IMR-90 (cell line): ENCODE measurements at regions of chr10 and their contacts with region 1.

Region 1: GRCh38 chr10:28393966-28394568 is 91.2 kb upstream of the MPP7 start:
- DNase-seq: peak; percentile 57
- ATAC-seq: peak; percentile 95
- H3K4me3 ChIP-seq: no peak overlapping the region
- H3K27ac ChIP-seq: no peak overlapping the region
- H3K4me1 ChIP-seq: no peaks in the 10 kb centered on the region
- H3K27me3 ChIP-seq: 0 out of 2 replicates have a peak, but pooled peaks cover 2% of the 10 kb centered on the region
- CTCF ChIP-seq: peak; percentile 76
- POLR2A ChIP-seq: no peak
- RAD21 ChIP-seq: peak; percentile 64

Region 2: GRCh38 chr10:28250782-28251181 is 143.3 kb before region 1 on chr10:
- CTCF ChIA-PET with region 1: interaction called, 15 read pairs
- POLR2A ChIA-PET with region 1: no interaction called
- dilution Hi-C with region 1: loop called (anchors 25 kb)
- in situ Hi-C with region 1: no loop called
- intact Hi-C with region 1: no loop called
- DNase-seq: peak; percentile 51
- ATAC-seq: peak; percentile 59
- H3K4me3 ChIP-seq: no peak overlapping the region
- H3K27ac ChIP-seq: no peak overlapping the region
- H3K4me1 ChIP-seq: peaks cover 5% of the 10 kb centered on the region; the same call in 1 of the 2 replicates
- H3K27me3 ChIP-seq: peaks cover 6% of the 10 kb centered on the region; the same call in 1 of the 2 replicates
- CTCF ChIP-seq: peak; percentile 67
- POLR2A ChIP-seq: no peak
- RAD21 ChIP-seq: peak; percentile 71

Region 3: GRCh38 chr10:28374036-28374435 is 20.0 kb before region 1 on chr10:
- CTCF ChIA-PET with region 1: interaction called, 10 read pairs
- POLR2A ChIA-PET with region 1: no interaction called
- dilution Hi-C with region 1: no loop called
- in situ Hi-C with region 1: no loop called
- intact Hi-C with region 1: no loop called
- DNase-seq: no peak
- ATAC-seq: no peak
- H3K4me3 ChIP-seq: no peak overlapping the region
- H3K27ac ChIP-seq: no peak overlapping the region
- H3K4me1 ChIP-seq: peaks cover 2% of the 10 kb centered on the region; the same call in 1 of the 2 replicates
- H3K27me3 ChIP-seq: peaks cover 2% of the 10 kb centered on the region
- CTCF ChIP-seq: no peak
- POLR2A ChIP-seq: no peak
- RAD21 ChIP-seq: no peak

Region 4: GRCh38 chr10:28463676-28464395 is 69.8 kb after region 1 on chr10:
- CTCF ChIA-PET with region 1: no interaction called
- POLR2A ChIA-PET with region 1: no interaction called
- dilution Hi-C with region 1: no loop called
- in situ Hi-C with region 1: no loop called
- intact Hi-C with region 1: no loop called
- DNase-seq: no peak
- ATAC-seq: no peak
- H3K4me3 ChIP-seq: no peak overlapping the region
- H3K27ac ChIP-seq: no peak overlapping the region
- H3K4me1 ChIP-seq: no peaks in the 10 kb centered on the region
- H3K27me3 ChIP-seq: peaks cover 9% of the 10 kb centered on the region
- CTCF ChIP-seq: no peak
- POLR2A ChIP-seq: no peak
- RAD21 ChIP-seq: no peak